ENCODE measurements at regions of chr21 and their contacts with region 1.

Region 1: DNA sequence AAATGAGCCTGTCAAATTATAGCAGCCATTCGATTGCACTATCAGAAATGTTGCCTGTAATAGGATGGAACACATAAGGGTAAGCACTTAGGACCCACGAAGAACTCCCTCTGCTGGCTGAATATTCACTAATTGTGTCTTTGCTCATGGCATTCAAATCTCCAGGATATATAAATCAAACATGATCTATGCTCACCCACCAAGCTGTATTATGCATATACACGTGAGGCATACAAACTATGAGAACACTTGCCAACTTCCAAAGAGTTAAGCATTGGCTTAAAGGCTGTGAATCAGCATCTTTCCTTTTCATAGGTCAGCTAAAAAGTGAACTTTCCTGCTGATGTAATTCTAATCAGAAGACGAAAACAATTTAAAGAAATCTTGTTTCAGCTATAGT is 34.5 kb downstream of the TMPRSS15 start:
- DNase-seq: peak; percentile 2
- ATAC-seq: no peak
- H3K4me3 ChIP-seq: no peak overlapping the region
- H3K27ac ChIP-seq: no peak overlapping the region
- H3K4me1 ChIP-seq: no peaks in the 10 kb centered on the region
- H3K27me3 ChIP-seq: no peaks in the 10 kb centered on the region
- CTCF ChIP-seq: no peak
- EP300 ChIP-seq: no peak
- POLR2A ChIP-seq: no peak
- RAD21 ChIP-seq: no peak

Region 2: DNA sequence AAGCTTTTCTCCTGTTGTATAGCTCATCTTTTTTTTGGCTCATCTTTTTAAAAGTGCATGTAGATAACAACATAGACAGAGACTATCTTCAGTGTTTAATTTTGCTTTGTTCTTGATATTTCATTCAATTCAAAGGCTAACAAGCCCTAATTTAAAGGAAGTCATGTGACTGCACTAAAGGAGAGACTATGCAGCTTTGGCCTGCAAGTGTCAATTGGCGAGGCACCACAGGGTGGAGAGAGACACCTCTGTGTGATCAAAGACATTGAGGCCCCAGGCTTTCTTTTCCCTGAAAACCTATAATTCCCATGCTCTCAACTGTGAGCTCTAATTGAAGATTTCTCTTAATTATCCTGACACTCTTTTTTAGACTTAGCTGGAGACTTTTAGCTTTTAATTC is 70.9 kb before region 1 on chr21:
- CTCF ChIA-PET with region 1: interaction called, 3 read pairs
- POLR2A ChIA-PET with region 1: no interaction called
- in situ Hi-C with region 1: no loop called
- intact Hi-C with region 1: loop called (anchors 1 kb)
- DNase-seq: no peak
- ATAC-seq: no peak
- H3K4me3 ChIP-seq: no peak overlapping the region
- H3K27ac ChIP-seq: no peak overlapping the region
- H3K4me1 ChIP-seq: no peaks in the 10 kb centered on the region
- H3K27me3 ChIP-seq: no peaks in the 10 kb centered on the region
- CTCF ChIP-seq: no peak
- EP300 ChIP-seq: no peak
- POLR2A ChIP-seq: no peak
- RAD21 ChIP-seq: no peak

Region 3: GRCh38 chr21:18334066-18334465 is 35.0 kb before region 1 on chr21:
- CTCF ChIA-PET with region 1: no interaction called
- POLR2A ChIA-PET with region 1: no interaction called
- in situ Hi-C with region 1: no loop called
- intact Hi-C with region 1: no loop called
- DNase-seq: no peak
- ATAC-seq: no peak
- H3K4me3 ChIP-seq: no peak overlapping the region
- H3K27ac ChIP-seq: no peak overlapping the region
- H3K4me1 ChIP-seq: no peaks in the 10 kb centered on the region
- H3K27me3 ChIP-seq: no peaks in the 10 kb centered on the region
- CTCF ChIP-seq: no peak
- EP300 ChIP-seq: no peak
- POLR2A ChIP-seq: no peak
- RAD21 ChIP-seq: no peak